Activated CD4-positive, alpha-beta T cell treated with anti-CD3 and anti-CD28 coated beads for 36 hours (primary cell): ENCODE measurements at regions of chr22 and their contacts with region 1.

Region 1: DNA sequence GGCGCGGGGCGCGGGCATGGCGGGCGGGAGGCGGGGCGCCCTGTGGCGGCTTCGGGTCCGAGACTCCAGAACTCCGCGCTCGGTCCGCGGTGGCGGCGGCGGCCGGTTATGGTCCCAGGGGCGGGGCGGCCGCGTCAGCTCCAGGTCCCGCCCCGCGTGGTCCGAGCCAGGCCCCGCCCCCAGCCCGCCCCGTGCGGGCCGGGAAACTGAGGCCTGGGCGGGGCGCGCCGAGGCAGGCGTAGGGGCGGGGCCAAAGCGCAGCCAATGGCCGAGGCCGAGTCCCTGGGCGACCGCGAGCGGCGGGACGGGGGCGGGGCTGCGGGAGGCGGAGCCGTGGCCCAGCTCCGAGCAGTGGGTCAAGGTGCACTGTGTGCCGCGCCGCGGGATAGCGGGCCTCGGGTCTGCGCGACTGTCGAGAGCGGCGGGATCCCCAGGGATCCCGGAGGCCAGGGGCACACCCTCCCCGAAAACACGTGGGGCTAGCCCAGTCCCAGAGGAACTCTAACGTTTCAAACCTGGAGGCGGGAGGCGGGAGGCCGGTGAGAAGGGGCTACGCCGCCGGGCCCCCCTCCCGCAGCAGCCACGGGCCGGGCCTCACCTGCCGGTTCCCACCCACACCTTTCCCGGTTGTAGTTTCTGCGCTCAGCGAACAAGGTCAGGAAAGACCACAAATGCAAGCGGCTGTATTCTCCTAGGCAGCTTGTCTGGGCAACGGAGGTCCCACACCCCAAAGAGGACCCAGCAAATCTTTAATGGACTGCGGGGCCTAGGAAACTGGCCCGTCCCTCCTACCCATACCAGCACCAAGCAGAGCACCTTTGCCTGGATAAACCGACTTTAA is at the start of gene SLC25A1:
- DNase-seq: peak; percentile 93
- ATAC-seq: peak; percentile 82
- H3K4me3 Mint-ChIP-seq: peak within 1 kb of the TSS; percentile 75
- H3K27ac Mint-ChIP-seq: peak within 1 kb of the TSS; percentile 19
- H3K4me1 Mint-ChIP-seq: peaks cover 27% of the 10 kb centered on the region
- H3K27me3 Mint-ChIP-seq: no peaks in the 10 kb centered on the region
- total RNA-seq, gene SLC25A1: 48.5 to 52.8 TPM

Region 2: DNA sequence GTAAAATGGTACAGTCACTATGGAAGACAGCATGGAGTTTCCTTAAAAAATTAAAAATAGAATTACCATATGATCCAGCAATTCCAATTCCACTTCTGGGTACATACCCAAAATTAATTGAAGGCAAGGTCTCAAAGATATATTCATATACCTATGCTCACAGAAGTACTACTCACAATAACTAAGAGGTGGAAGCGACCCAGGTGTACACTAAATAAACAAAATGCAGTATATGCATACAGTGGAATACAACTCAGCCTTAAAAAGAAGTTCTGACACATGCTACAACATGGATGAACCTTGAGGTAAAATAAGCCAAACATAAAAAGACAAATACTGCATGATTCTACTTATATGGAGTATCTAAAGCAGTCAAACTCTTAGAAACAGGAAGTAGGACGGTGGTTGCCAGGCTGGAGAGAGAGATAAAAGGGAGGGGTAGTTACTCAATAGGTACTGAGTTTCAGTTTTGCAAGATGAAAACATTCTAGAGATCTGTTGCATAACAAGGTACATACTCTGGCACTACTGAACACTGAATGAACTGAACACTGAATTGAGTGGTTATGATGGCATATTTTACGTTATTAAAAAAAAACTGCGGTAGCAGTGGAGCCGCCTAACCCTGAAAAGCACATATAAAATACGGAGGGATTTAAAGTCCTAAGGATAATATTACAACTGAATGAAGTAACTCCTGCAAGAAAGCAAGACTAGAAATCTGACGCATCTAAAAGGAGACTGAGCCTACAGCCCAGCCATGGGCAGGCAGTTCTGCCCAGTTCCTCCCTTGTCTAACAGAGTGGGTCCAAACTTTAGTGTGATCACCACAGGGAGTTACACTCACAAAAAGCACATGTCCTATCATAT is 69.4 kb before region 1 on chr22:
- CTCF ChIA-PET with region 1: interaction called, 3 read pairs
- POLR2A ChIA-PET with region 1: no interaction called
- intact Hi-C with region 1: loop called in 1 of 2 experiments (anchors 5 kb)
- DNase-seq: peak; percentile 70
- ATAC-seq: peak; percentile 94
- H3K4me3 Mint-ChIP-seq: peak overlapping the region; percentile 5
- H3K27ac Mint-ChIP-seq: peak overlapping the region; percentile 72
- H3K4me1 Mint-ChIP-seq: peaks cover 68% of the 10 kb centered on the region
- H3K27me3 Mint-ChIP-seq: no peaks in the 10 kb centered on the region

Region 3: GRCh38 chr22:19143967-19144400 is 34.9 kb before region 1 on chr22:
- CTCF ChIA-PET with region 1: interaction called, 18 read pairs
- POLR2A ChIA-PET with region 1: interaction called, 14 read pairs
- intact Hi-C with region 1: loop called (anchors 1 to 2 kb)
- DNase-seq: peak; percentile 69
- ATAC-seq: peak; percentile 37
- H3K4me3 Mint-ChIP-seq: peak overlapping the region; percentile 95
- H3K27ac Mint-ChIP-seq: peak overlapping the region; percentile 96
- H3K4me1 Mint-ChIP-seq: peaks cover 18% of the 10 kb centered on the region
- H3K27me3 Mint-ChIP-seq: peaks cover 5% of the 10 kb centered on the region

Region 4: DNA sequence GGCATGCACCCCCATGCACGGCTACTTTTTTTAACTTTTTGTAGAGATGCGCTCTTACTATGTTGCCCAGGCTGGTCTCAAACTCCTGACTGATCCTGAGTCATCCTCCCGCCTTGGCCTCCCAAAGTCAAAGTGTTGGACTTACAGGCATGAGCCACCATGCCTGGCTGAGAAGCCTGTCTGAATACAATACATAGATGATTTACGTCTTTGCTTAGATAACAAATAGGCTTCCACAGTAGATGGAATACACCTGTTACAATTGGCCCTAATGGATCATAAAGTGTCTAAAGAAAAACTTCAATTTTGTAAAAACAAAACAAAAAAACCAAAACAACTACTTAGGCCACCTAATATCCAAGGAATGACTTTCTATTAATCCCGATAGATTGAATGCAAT is 125.7 kb after region 1 on chr22:
- CTCF ChIA-PET with region 1: no interaction called
- POLR2A ChIA-PET with region 1: no interaction called
- intact Hi-C with region 1: no loop called
- DNase-seq: no peak
- ATAC-seq: no peak
- H3K4me3 Mint-ChIP-seq: no peak overlapping the region
- H3K27ac Mint-ChIP-seq: no peak overlapping the region
- H3K4me1 Mint-ChIP-seq: no peaks in the 10 kb centered on the region
- H3K27me3 Mint-ChIP-seq: no peaks in the 10 kb centered on the region

Region 5: DNA sequence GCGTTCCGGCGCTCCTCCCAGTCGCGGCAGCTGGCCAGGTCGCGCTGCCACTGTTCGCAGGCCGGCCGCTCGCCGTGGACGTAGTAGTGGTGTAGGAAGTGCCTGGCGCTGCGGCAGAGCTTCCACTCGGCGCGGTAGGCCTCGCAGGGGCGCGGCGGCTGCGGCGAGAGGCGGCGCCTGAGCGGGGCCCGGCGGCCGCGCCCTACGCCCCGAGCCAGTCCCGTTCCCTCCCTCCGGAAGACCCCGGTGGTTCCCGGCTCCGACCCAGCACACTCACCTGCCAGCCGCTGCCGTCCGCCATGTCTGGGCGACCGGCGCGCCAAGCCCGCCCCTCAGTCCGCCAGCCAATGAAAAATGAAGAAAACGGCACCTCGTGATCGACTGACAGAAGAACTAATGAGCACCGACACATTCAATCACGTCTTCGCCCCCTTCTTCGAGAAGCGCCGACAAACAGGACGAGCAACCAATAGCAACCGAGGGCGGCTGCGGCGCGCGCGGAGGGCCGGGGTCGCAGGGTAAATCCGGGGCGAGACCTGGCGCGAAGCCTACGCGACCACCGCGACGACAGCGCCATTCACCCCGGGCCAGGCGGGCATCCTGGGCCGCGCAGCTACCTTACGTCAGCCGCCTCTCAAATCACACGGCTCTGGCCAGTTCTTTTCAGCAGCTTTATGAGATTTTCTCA is 268.7 kb after region 1 on chr22 and contains the start of gene C22orf39:
- CTCF ChIA-PET with region 1: no interaction called
- POLR2A ChIA-PET with region 1: interaction called, 4 read pairs
- intact Hi-C with region 1: loop called (anchors 1 to 5 kb)
- DNase-seq: peak; percentile 91
- ATAC-seq: peak; percentile 83
- H3K4me3 Mint-ChIP-seq: peak within 1 kb of the TSS; percentile 87
- H3K27ac Mint-ChIP-seq: peak within 1 kb of the TSS; percentile 98
- H3K4me1 Mint-ChIP-seq: peaks cover 36% of the 10 kb centered on the region
- H3K27me3 Mint-ChIP-seq: no peaks in the 10 kb centered on the region
- total RNA-seq, gene C22orf39: 21.9 to 22.2 TPM

Region 6: GRCh38 chr22:19576460-19577421 is 397.9 kb after region 1 on chr22:
- CTCF ChIA-PET with region 1: no interaction called
- POLR2A ChIA-PET with region 1: no interaction called
- intact Hi-C with region 1: loop called in 1 of 2 experiments (anchors 2 kb)
- DNase-seq: peak; percentile 86
- ATAC-seq: peak; percentile 88
- H3K4me3 Mint-ChIP-seq: peak overlapping the region; percentile 22
- H3K27ac Mint-ChIP-seq: peak overlapping the region; percentile 91
- H3K4me1 Mint-ChIP-seq: peaks cover 45% of the 10 kb centered on the region
- H3K27me3 Mint-ChIP-seq: no peaks in the 10 kb centered on the region

Region 7: GRCh38 chr22:19941365-19942082 is 762.6 kb after region 1 on chr22 and contains the starts of genes COMT and TXNRD2:
- CTCF ChIA-PET with region 1: no interaction called
- POLR2A ChIA-PET with region 1: no interaction called
- intact Hi-C with region 1: loop called in 1 of 2 experiments (anchors 5 kb)
- DNase-seq: peak; percentile 83
- ATAC-seq: peak; percentile 85
- H3K4me3 Mint-ChIP-seq: peak within 1 kb of the TSS; percentile 98
- H3K27ac Mint-ChIP-seq: peak within 1 kb of the TSS; percentile 98
- H3K4me1 Mint-ChIP-seq: peaks cover 27% of the 10 kb centered on the region
- H3K27me3 Mint-ChIP-seq: no peaks in the 10 kb centered on the region
- total RNA-seq, gene COMT: 63.5 to 78.5 TPM
- total RNA-seq, gene TXNRD2: 24.1 to 25.3 TPM